Posterior cingulate gyrus (tissue), 11 donors: ENCODE measurements at regions of chr10 and their contacts with region 1.

Region 1: GRCh38 chr10:6401562-6402348 is 178.3 kb downstream of the PRKCQ start:
- DNase-seq: peak; percentile 57 to 96 (median 72)

Region 2: DNA sequence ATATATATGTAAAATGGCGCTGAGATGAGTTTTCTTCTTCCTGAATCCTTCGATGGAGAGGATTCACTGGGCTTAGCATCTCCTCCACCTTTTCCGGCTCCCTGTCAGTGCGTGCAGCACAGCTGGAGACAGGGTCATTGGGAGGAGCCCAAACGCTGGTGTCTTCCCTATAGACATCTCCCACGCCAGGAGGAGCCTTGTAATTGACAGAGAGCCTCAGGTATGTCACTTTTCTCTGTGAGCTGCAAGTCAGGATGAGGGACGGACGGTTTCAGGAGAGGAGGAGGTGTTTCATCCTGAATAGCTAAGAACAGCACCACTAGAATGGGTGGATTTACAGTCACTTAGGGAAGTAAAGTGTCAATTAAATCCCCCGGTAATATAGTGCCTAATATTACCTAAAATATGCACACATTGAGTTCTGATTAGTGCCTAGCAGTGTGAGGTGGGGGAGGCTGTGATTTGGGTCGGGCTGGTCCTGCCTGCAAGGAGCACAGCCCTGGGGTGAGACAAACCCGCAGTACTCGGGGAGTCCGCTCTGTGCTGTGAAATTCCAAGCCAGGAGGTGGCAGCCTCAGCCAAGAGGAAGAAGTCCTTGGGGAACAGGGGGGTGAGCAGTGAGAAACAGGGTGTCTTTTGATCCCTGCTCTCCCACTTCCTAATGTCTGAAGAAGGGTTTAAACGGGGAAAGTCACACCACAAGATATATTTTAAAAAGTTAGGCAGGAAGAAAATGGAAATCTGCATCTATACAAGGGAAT is 452.6 kb before region 1 on chr10:
- intact Hi-C with region 1: loop called (anchors 5 kb)
- DNase-seq: peak; percentile 60 to 95 (median 74)

Region 3: GRCh38 chr10:6014241-6014761 is 387.5 kb before region 1 on chr10:
- intact Hi-C with region 1: loop called (anchors 5 kb)
- DNase-seq: peak in 4 of 10 donors; percentile 36 to 60 (median 48)

Region 4: GRCh38 chr10:6088721-6089390 is 312.9 kb before region 1 on chr10 and contains the start of gene RBM17:
- intact Hi-C with region 1: loop called (anchors 5 kb)
- DNase-seq: peak; percentile 85 to 99 (median 90)

Region 5: GRCh38 chr10:6108603-6109443 is 292.9 kb before region 1 on chr10:
- intact Hi-C with region 1: loop called (anchors 2 kb)
- DNase-seq: no peak

Region 6: GRCh38 chr10:6202684-6203330 is 198.9 kb before region 1 on chr10 and contains the start of gene PFKFB3:
- intact Hi-C with region 1: loop called (anchors 2 kb)
- DNase-seq: peak; percentile 95 to 100 (median 96)

Region 7: GRCh38 chr10:6507311-6507710 is 105.6 kb after region 1 on chr10:
- intact Hi-C with region 1: no loop called
- DNase-seq: peak in 1 of 10 donors; percentile 23